ENCODE measurements at regions of chr11 and their contacts with region 1.

Region 1: DNA sequence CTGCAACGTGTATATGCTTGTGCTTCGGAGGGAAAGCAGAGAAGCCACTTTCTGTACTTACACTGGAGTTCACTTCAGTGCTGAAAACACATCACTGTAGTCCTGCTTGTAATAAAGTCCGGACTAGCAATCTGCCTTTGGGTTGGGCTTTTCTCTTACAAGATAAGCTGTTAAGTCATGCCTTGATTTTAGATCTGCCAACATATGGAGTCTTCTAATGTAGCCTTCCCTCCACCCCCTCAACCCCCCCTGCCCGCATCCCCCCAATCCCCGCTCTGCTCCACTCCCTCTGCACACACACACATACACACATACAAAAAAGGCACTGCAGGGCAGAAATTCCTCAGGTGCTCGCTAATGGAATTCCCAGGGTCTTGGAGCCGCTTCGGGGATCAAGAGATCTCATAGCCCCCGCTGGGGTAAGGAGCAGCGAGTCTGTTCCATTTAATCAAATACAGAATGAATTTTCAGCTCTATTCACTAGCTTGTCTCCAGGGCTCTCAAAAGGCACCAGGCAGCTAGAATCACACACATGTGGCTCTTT is 3.4 kb downstream of the CDON start:
- DNase-seq: no peak
- H3K4me3 ChIP-seq: peak overlapping the region; percentile 21
- H3K27ac ChIP-seq: peak overlapping the region in 1 of 2 donors; percentile 30
- H3K4me1 ChIP-seq: peaks cover 4% of the 10 kb centered on the region
- H3K27me3 ChIP-seq: no peaks in the 10 kb centered on the region
- CTCF ChIP-seq: no peak
- EP300 ChIP-seq: no peak
- POLR2A ChIP-seq: no peak

Region 2: DNA sequence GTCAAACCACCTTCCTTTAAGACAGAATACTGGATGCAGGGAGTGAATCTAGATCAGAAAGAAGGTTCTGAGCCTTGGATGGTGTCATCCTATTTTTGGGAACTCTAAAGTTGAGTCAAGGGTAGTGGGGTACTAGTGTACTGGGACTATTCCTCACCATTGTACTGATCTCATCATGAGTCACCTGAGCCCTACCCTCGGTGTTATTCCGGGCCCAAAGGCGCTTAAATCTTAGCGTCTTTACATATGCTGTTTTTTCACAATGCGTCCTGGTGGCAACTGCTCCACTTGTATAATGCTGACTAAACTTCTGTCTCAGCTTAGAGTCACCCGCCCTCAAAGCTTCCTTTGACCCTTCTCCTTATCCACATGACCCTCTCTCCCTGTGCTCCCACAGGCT is 338.5 kb before region 1 on chr11:
- intact Hi-C with region 1: no loop called
- DNase-seq: no peak
- H3K4me3 ChIP-seq: no peak overlapping the region
- H3K27ac ChIP-seq: no peak overlapping the region
- H3K4me1 ChIP-seq: no peaks in the 10 kb centered on the region
- H3K27me3 ChIP-seq: no peaks in the 10 kb centered on the region
- CTCF ChIP-seq: no peak
- EP300 ChIP-seq: no peak
- POLR2A ChIP-seq: no peak

Region 3: DNA sequence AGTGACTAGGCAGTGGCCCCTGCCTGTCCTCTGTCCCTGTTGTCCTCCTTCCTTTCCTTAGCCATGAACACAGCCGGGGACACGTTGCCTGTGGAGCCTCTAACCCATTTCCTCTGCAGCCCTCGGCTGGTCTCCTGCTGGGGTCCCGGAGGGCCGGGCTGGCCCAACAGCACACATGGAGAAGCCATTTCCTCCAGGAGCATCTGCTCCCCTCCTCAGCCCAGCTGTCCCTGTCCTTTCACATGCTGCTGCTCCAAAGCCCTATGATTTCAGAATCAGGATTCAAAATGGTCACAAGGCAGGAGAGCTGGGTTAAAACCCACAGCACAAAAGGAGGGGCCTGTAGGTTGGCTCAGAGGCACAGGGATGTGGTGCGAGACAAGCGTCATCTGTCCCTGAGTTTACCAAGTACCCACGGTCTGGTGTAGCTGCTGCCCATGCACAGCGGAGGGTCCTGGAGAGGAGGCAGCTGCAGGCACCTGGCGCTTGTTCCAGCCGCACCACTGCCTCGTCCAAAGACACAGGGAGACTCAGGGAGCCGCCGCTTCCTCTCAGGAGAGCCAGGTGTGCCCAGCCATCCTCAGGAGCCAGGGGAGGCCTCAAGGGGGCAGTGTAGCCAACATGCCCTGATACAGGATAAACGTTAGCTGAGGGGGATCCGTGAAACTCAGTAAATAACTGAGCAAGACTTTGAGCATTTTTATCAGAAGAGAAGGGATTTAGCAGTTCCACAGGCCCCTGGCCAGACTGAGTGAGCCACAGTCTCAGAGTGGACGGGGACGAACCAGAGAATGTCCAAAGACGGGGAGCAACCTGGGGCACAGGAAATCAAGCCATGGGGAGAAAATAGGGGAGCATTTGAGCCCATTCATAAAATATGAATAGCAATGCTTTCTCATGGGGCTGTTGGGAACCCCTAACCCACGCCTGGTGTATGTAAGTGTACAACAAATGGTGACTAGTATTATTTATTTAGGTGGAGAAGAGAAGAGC is 117.4 kb before region 1 on chr11:
- intact Hi-C with region 1: loop called in 2 of 4 experiments (anchors 10 kb)
- DNase-seq: peak; percentile 55 to 75 (median 72)
- H3K4me3 ChIP-seq: no peak overlapping the region
- H3K27ac ChIP-seq: no peak overlapping the region
- H3K4me1 ChIP-seq: peaks cover 1% of the 10 kb centered on the region
- H3K27me3 ChIP-seq: no peaks in the 10 kb centered on the region
- CTCF ChIP-seq: peak in 2 of 3 donors; percentile 32 to 39
- EP300 ChIP-seq: no peak
- POLR2A ChIP-seq: no peak

Region 4: GRCh38 chr11:125990244-125990643 is 69.1 kb before region 1 on chr11:
- intact Hi-C with region 1: loop called in 1 of 4 experiments (anchors 10 kb)
- DNase-seq: peak in 2 of 5 donors; percentile 46 to 64
- H3K4me3 ChIP-seq: no peak overlapping the region
- H3K27ac ChIP-seq: peak overlapping the region in 1 of 2 donors; percentile 11
- H3K4me1 ChIP-seq: peaks cover 3% of the 10 kb centered on the region
- H3K27me3 ChIP-seq: no peaks in the 10 kb centered on the region
- CTCF ChIP-seq: no peak
- EP300 ChIP-seq: no peak
- POLR2A ChIP-seq: no peak

Measured in ovary (tissue), 10 donors.